Esophagus squamous epithelium (tissue), 5 donors: ENCODE measurements at regions of chrX and their contacts with region 1.

Region 1: GRCh38 chrX:17046478-17047097 is 100.1 kb downstream of the REPS2 start:
- DNase-seq: no peak
- H3K4me3 ChIP-seq: no peak overlapping the region
- H3K27ac ChIP-seq: no peak overlapping the region
- H3K4me1 ChIP-seq: no peaks in the 10 kb centered on the region
- H3K27me3 ChIP-seq: no peaks in the 10 kb centered on the region
- CTCF ChIP-seq: peak; percentile 21 to 76 (median 66)
- POLR2A ChIP-seq: no peak

Region 2: DNA sequence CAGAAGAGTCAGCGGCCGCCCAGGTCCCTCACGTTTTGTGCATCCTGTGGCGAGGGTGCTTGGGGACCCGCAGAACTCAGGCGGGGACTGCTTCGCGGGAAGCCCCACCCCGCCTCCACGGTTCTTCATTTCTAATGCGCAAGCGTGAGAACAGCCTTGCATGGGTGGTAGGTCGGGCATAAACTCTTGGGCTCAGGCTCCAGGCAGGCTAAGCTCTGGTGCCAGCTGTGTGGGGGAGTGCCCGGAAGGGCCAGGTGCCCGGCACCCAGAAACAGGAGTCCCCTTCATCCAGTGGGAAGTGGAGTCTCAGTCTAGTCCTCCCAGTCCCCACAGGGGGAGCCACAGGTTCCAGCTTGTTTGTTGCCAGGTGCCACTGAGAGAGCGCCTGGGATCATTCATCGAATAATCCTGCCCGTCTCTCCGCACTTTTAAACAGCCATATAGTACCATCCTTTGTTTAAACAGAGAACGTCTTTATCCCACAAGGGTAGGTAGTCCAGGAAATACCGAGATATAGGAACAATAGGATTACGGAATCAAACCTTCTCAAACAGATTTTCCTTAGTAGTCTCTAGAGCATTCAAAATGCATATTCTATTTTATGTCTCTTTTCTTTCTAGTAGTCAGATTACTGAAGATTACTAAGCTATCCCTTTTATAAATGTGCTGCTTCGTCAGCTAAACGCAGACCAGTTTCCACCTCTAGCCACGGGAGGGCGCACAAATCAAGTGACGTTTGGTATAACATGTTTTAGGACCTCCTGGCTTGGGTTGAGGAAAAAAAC is 163.7 kb before region 1 on chrX:
- intact Hi-C with region 1: loop called (anchors 10 kb)
- DNase-seq: peak; percentile 8
- H3K4me3 ChIP-seq: peak overlapping the region; percentile 20 to 61 (median 45)
- H3K27ac ChIP-seq: peak overlapping the region; percentile 63 to 78 (median 72)
- H3K4me1 ChIP-seq: peaks cover 0 to 13% (median 0%) of the 10 kb centered on the region in 3 donors
- H3K27me3 ChIP-seq: no peaks in the 10 kb centered on the region
- CTCF ChIP-seq: peak; percentile 18 to 59 (median 54)
- POLR2A ChIP-seq: no peak

Region 3: DNA sequence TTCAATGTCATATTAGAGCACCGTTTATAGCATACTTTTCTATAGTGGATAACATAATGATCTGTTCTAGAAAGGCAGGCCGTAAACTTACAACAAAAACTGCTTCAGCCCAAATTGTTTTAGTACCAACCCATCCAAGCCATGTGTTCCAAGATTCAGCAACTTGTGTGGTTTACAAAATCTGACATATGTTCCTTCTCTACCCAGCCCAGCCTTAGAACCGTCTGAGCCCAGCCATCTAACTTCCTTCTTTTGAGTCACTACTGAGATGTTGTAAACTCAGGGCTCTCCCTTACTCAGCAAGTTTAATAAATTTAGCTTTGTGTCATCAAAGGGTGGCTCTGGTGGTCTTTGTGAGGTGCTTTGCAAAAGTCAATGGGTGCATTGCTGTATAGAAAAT is 132.5 kb before region 1 on chrX:
- intact Hi-C with region 1: no loop called
- DNase-seq: no peak
- H3K4me3 ChIP-seq: no peak overlapping the region
- H3K27ac ChIP-seq: no peak overlapping the region
- H3K4me1 ChIP-seq: no peaks in the 10 kb centered on the region
- H3K27me3 ChIP-seq: no peaks in the 10 kb centered on the region
- CTCF ChIP-seq: no peak
- POLR2A ChIP-seq: no peak